T-cell (primary cell): ENCODE measurements at regions of chr2 and their contacts with region 1.

Region 1: DNA sequence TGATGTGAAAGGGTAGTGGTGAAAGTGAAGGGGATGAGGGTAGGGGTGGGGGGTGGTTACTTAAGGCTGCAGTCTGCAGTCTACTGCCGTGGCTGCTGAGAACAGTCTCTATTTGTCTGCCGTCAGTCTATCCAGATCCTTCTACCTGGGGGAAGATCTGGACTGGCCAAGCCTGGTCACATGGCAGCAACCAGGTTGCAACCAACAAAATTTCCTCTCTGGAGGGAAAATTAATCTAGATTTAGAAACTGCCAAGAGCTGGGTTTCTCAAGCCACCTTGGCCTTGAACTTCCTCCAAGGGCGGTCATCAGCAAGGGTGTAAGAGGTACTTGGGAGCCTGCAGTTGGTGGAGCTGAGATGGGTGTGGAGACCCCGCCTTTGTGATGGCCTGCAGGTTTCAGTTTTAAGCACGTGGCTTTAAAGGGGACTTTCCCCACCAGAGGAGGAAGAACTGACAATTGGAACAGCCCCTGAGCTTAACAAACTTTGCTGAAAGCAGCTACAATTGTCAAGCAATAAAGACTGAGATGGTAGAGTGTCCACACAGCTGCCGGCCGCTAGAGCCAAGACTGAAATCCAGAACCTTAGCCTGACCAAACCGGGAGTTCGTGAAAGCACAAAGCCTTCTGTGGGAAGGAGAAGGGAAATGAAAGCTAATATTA is 31.4 kb upstream of the KCMF1 start:
- DNase-seq: peak in 34 of 35 experiments; percentile 36 to 89 (median 69)
- ATAC-seq: peak; percentile 82 to 89 (median 88)
- H3K4me3 ChIP-seq: peak overlapping the region in 1 of 2 donors; percentile 20
- H3K4me3 Mint-ChIP-seq: peak overlapping the region; percentile 62 to 74 (median 69)
- H3K27ac ChIP-seq: peak overlapping the region; percentile 93
- H3K27ac Mint-ChIP-seq: peak overlapping the region; percentile 94 to 97
- H3K4me1 ChIP-seq: peaks cover 8 to 30% of the 10 kb centered on the region in 2 experiments
- H3K4me1 Mint-ChIP-seq: peaks cover 19 to 41% (median 28%) of the 10 kb centered on the region in 3 donors
- H3K27me3 ChIP-seq: no peaks in the 10 kb centered on the region
- H3K27me3 Mint-ChIP-seq: no peaks in the 10 kb centered on the region

Region 2: GRCh38 chr2:84970868-84971509 is 31.4 kb after region 1 on chr2 and contains the start of gene KCMF1:
- CTCF ChIA-PET with region 1: interaction called, 3 to 13 read pairs
- POLR2A ChIA-PET with region 1: interaction called, 7 to 9 read pairs
- DNase-seq: peak in 34 of 35 experiments; percentile 20 to 75 (median 52)
- ATAC-seq: peak; percentile 63 to 67 (median 63)
- H3K4me3 ChIP-seq: peak within 1 kb of the TSS; percentile 95 to 99
- H3K4me3 Mint-ChIP-seq: peak within 1 kb of the TSS; percentile 98 to 99 (median 99)
- H3K27ac ChIP-seq: peak within 1 kb of the TSS; percentile 90
- H3K27ac Mint-ChIP-seq: peak within 1 kb of the TSS; percentile 98 to 99
- H3K4me1 ChIP-seq: peaks cover 26 to 34% of the 10 kb centered on the region in 2 experiments
- H3K4me1 Mint-ChIP-seq: peaks cover 59 to 65% (median 64%) of the 10 kb centered on the region in 3 donors
- H3K27me3 ChIP-seq: no peaks in the 10 kb centered on the region
- H3K27me3 Mint-ChIP-seq: no peaks in the 10 kb centered on the region
- total RNA-seq, gene KCMF1: 56.7 to 62.5 (median 60.3) TPM

Region 3: GRCh38 chr2:85354286-85355072 is 414.9 kb after region 1 on chr2 and contains the starts of genes ELMOD3 and RETSAT:
- CTCF ChIA-PET with region 1: no interaction called
- POLR2A ChIA-PET with region 1: no interaction called
- DNase-seq: peak; percentile 88 to 99 (median 97)
- ATAC-seq: peak; percentile 98 to 100 (median 99)
- H3K4me3 ChIP-seq: peak within 1 kb of the TSS; percentile 74 to 81
- H3K4me3 Mint-ChIP-seq: peak within 1 kb of the TSS; percentile 92 to 100 (median 97)
- H3K27ac ChIP-seq: peak within 1 kb of the TSS; percentile 77
- H3K27ac Mint-ChIP-seq: peak within 1 kb of the TSS; percentile 99
- H3K4me1 ChIP-seq: peaks cover 13 to 29% of the 10 kb centered on the region in 2 experiments
- H3K4me1 Mint-ChIP-seq: peaks cover 54 to 59% (median 59%) of the 10 kb centered on the region in 3 donors
- H3K27me3 ChIP-seq: no peaks in the 10 kb centered on the region
- H3K27me3 Mint-ChIP-seq: no peaks in the 10 kb centered on the region
- total RNA-seq, gene ELMOD3: 18.8 to 30.9 (median 25.2) TPM
- total RNA-seq, gene RETSAT: 24.2 to 36.3 (median 26.5) TPM